K562 (cell line): ENCODE measurements at regions of chr16 and their contacts with region 1.

Region 1: GRCh38 chr16:73713778-73714495 is 582.7 kb upstream of the PSMD7 start:
- DNase-seq: peak; percentile 21 to 51 (median 36)
- ATAC-seq: peak; percentile 73
- H3K4me3 ChIP-seq: no peak overlapping the region
- H3K27ac ChIP-seq: no peak overlapping the region
- H3K4me1 ChIP-seq: no peaks in the 10 kb centered on the region
- H3K27me3 ChIP-seq: peaks cover 3 to 12% of the 10 kb centered on the region in 2 experiments; a peak in 3 of 5 replicates
- CTCF ChIP-seq: peak; percentile 31 to 62 (median 54); a peak in 5 of 6 replicates
- EP300 ChIP-seq: no peak
- POLR2A ChIP-seq: no peak
- RAD21 ChIP-seq: peak; percentile 14 to 45; a peak in 2 of 4 replicates

Region 2: GRCh38 chr16:73483076-73483791 is 230.7 kb before region 1 on chr16:
- CTCF ChIA-PET with region 1: no interaction called
- POLR2A ChIA-PET with region 1: no interaction called
- in situ Hi-C with region 1: no loop called
- intact Hi-C with region 1: no loop called
- DNase-seq: no peak
- ATAC-seq: no peak
- H3K4me3 ChIP-seq: no peak overlapping the region
- H3K27ac ChIP-seq: no peak overlapping the region
- H3K4me1 ChIP-seq: no peaks in the 10 kb centered on the region
- H3K27me3 ChIP-seq: peaks cover 2 to 23% of the 10 kb centered on the region in 2 experiments; a peak in 4 of 5 replicates
- CTCF ChIP-seq: no peak
- EP300 ChIP-seq: no peak
- POLR2A ChIP-seq: no peak
- RAD21 ChIP-seq: no peak

Region 3: GRCh38 chr16:73878611-73879010 is 164.7 kb after region 1 on chr16:
- CTCF ChIA-PET with region 1: no interaction called
- POLR2A ChIA-PET with region 1: no interaction called
- in situ Hi-C with region 1: no loop called
- intact Hi-C with region 1: loop called (anchors 10 kb)
- DNase-seq: peak in 3 of 4 experiments; percentile 7 to 47 (median 26)
- ATAC-seq: peak; percentile 67
- H3K4me3 ChIP-seq: no peak overlapping the region
- H3K27ac ChIP-seq: no peak overlapping the region
- H3K4me1 ChIP-seq: no peaks in the 10 kb centered on the region
- H3K27me3 ChIP-seq: no peaks in the 10 kb centered on the region
- CTCF ChIP-seq: peak; percentile 30 to 67 (median 41); a peak in 4 of 6 replicates
- EP300 ChIP-seq: no peak
- POLR2A ChIP-seq: no peak
- RAD21 ChIP-seq: peak; percentile 75 to 81

Region 4: DNA sequence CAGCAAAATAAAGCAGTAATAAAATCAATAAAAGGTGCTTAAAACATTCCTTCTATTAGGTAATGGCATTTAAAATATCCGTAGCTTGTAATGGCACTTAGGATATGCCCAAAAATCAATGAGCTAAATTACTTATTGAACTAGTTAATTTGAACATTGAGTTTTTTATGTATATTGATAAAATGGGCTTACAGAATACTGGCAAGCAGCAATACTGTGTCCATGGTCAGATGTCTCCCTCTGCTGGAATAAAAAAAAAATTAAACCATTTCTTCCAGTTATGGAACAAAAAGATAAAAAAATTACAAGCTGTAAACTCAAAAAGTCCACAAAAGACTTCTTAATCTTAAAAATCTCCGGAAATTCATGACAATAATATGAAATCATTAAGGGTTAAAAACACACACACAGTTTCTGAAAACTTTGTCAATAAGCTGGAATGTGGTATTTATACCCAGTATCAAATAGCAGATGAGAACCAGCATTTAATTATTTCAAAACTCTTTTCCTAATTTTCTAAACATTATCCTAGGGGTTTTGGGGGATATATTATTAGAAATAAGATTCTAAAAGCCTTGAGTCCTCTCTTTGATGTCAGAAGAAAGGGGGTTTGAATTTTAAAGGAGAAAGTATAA is 561.2 kb after region 1 on chr16:
- CTCF ChIA-PET with region 1: no interaction called
- POLR2A ChIA-PET with region 1: no interaction called
- in situ Hi-C with region 1: no loop called
- intact Hi-C with region 1: loop called (anchors 10 kb)
- DNase-seq: peak; percentile 24 to 39 (median 36)
- ATAC-seq: 0 out of 3 replicates have a peak, but pooled peaks have one; percentile 48
- H3K4me3 ChIP-seq: no peak overlapping the region
- H3K27ac ChIP-seq: no peak overlapping the region
- H3K4me1 ChIP-seq: peaks cover 0 to 2% of the 10 kb centered on the region in 2 experiments; a peak in 2 of 5 replicates
- H3K27me3 ChIP-seq: peaks cover 3 to 6% of the 10 kb centered on the region in 2 experiments; a peak in 4 of 5 replicates
- CTCF ChIP-seq: peak in 2 of 3 experiments; percentile 36 to 71; a peak in 4 of 6 replicates
- EP300 ChIP-seq: no peak
- POLR2A ChIP-seq: no peak
- RAD21 ChIP-seq: peak; percentile 75 to 80